Dorsolateral prefrontal cortex (tissue), 120 donors: ENCODE measurements at regions of chr2 and their contacts with region 1.

Region 1: DNA sequence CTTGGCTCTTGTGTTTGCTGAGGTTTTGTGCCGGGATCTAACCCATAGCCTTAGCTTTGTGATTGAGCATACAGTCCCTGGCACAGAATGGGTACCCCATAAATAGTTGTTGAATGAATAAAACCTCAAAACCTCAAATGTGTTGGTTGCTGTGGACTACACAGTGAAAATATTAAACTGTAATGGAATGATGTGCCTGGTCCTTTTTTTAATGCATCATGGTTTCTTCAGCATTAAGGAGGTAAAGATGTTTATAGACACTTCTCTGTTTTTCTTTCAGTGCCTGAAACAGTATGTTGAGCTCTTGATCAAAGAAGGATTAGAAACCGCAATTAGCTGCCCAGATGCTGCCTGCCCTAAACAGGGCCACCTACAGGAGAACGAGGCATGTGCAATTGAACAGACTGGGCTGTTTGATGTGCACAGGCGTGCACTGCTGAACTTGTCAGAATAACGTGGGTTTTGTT is 97.0 kb downstream of the RNF144A start:
- DNase-seq: peak in 5 of 10 donors; percentile 50 to 80 (median 69)
- H3K4me3 ChIP-seq: peak overlapping the region in 1 of 59 donors; percentile 4
- H3K27ac ChIP-seq: peak overlapping the region; percentile 40 to 98 (median 94)
- H3K27me3 ChIP-seq: no peaks in the 10 kb centered on the region
- CTCF ChIP-seq: peak; percentile 22 to 82 (median 62)

Region 2: GRCh38 chr2:6917071-6917760 is 97.0 kb before region 1 on chr2 and contains the start of gene RNF144A:
- intact Hi-C with region 1: loop called (anchors 5 kb)
- DNase-seq: peak in 8 of 10 donors; percentile 55 to 87 (median 71)
- H3K4me3 ChIP-seq: peak within 1 kb of the TSS; percentile 59 to 93 (median 82)
- H3K27ac ChIP-seq: peak within 1 kb of the TSS; percentile 72 to 97 (median 92)
- H3K27me3 ChIP-seq: no peaks in the 10 kb centered on the region
- CTCF ChIP-seq: peak in 54 of 56 donors; percentile 22 to 72 (median 53)
- total RNA-seq, gene RNF144A: 49.5 to 144 (median 83.6) TPM

Region 3: DNA sequence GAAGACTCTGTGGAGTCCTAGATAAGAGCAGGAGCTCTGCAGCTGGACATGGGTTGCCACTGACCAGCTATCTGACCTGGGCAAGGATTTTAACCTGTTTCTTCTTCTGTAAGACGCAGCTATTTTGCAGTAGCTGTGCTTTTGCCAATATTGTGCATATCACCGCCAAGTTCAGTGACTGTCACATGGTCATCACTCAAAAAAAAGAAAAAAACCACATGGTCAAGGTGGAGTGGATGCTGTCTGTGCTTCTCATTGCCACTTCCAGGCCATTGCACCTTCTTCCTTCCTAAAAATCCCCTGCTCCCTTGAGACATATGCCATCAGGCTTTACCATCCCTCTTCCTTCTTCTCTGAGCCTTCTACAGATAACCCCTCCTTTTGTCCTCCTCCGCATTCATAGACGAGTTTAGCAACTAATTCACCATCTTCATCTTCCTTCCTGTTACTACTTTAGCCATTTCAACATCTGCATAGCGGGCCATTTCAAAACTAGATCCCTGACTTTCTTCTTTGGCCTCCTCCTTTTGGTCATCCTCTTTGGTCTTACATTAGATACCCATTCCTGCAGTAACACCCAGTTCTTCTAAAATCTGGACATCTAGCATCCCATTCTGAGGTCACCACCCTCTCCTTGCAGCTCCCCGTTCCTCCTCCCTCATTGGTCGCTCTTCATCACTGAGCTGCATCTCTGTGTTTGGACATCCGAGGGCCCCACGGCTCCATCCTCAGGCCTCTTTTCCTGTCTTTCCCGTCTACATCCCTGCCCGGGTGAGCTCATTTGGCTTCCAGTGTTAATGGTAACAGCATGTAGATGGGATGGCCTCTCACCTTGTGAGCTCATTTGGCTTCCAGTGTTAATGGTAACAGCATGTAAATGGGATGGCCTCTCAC is 79.2 kb before region 1 on chr2:
- intact Hi-C with region 1: loop called in 1 of 2 experiments (anchors 5 kb)
- DNase-seq: peak in 2 of 10 donors; percentile 69 to 72
- H3K4me3 ChIP-seq: peak overlapping the region in 48 of 59 donors; percentile 1 to 71 (median 54)
- H3K27ac ChIP-seq: peak overlapping the region in 57 of 59 donors; percentile 32 to 95 (median 85)
- H3K27me3 ChIP-seq: no peaks in the 10 kb centered on the region
- CTCF ChIP-seq: peak in 7 of 56 donors; percentile 3 to 33 (median 21)

Region 4: GRCh38 chr2:6986301-6987176 is 27.7 kb before region 1 on chr2:
- intact Hi-C with region 1: loop called in 1 of 2 experiments (anchors 1 kb)
- DNase-seq: no peak
- H3K4me3 ChIP-seq: peak overlapping the region in 48 of 59 donors; percentile 4 to 64 (median 38)
- H3K27ac ChIP-seq: peak overlapping the region; percentile 83 to 98 (median 94)
- H3K27me3 ChIP-seq: no peaks in the 10 kb centered on the region
- CTCF ChIP-seq: peak in 1 of 56 donors; percentile 10

Region 5: GRCh38 chr2:7044261-7045250 is 30.3 kb after region 1 on chr2:
- intact Hi-C with region 1: loop called in 1 of 2 experiments (anchors 1 kb)
- DNase-seq: peak; percentile 73 to 86 (median 80)
- H3K4me3 ChIP-seq: no peak overlapping the region
- H3K27ac ChIP-seq: peak overlapping the region in 36 of 59 donors; percentile 8 to 70 (median 34)
- H3K27me3 ChIP-seq: no peaks in the 10 kb centered on the region
- CTCF ChIP-seq: peak; percentile 63 to 98 (median 95)

Region 6: GRCh38 chr2:7133521-7133920 is 119.3 kb after region 1 on chr2:
- intact Hi-C with region 1: no loop called
- DNase-seq: no peak
- H3K4me3 ChIP-seq: no peak overlapping the region
- H3K27ac ChIP-seq: no peak overlapping the region
- H3K27me3 ChIP-seq: no peaks in the 10 kb centered on the region
- CTCF ChIP-seq: no peak